Activated CD4-positive, alpha-beta T cell treated with anti-CD3 and anti-CD28 coated beads for 36 hours (primary cell): ENCODE measurements at regions of chr16 and their contacts with region 1.

Region 1: DNA sequence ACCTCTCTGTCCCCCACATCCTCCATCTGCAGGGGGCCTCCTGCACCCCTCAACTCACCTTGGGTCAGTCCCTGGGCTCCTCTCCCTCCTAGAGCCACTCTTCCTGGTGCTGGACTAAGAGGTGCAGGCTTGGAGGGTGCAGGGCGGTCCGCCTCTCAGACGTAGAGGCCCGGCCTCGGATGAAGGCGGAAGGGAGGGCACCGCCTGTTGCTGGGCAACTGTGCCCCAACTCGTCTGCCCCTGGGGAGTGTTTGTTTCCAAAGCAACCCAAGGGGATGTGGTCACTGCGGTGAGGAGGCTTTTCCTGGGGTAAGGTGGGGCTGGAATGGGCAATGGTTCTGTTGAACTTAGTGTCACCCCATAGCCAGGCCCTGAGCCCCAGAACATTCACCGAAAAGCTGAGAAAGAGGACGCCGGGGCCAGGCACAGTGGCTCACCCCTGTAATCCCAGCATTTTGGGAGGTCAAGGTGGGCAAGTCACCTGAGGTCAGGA is at the start of gene C16orf54:
- DNase-seq: peak; percentile 93
- ATAC-seq: peak; percentile 78
- H3K4me3 Mint-ChIP-seq: peak within 1 kb of the TSS; percentile 97
- H3K27ac Mint-ChIP-seq: peak within 1 kb of the TSS; percentile 97
- H3K4me1 Mint-ChIP-seq: peaks cover 59% of the 10 kb centered on the region
- H3K27me3 Mint-ChIP-seq: no peaks in the 10 kb centered on the region
- total RNA-seq, gene C16orf54: 21.3 to 22.0 TPM

Region 2: DNA sequence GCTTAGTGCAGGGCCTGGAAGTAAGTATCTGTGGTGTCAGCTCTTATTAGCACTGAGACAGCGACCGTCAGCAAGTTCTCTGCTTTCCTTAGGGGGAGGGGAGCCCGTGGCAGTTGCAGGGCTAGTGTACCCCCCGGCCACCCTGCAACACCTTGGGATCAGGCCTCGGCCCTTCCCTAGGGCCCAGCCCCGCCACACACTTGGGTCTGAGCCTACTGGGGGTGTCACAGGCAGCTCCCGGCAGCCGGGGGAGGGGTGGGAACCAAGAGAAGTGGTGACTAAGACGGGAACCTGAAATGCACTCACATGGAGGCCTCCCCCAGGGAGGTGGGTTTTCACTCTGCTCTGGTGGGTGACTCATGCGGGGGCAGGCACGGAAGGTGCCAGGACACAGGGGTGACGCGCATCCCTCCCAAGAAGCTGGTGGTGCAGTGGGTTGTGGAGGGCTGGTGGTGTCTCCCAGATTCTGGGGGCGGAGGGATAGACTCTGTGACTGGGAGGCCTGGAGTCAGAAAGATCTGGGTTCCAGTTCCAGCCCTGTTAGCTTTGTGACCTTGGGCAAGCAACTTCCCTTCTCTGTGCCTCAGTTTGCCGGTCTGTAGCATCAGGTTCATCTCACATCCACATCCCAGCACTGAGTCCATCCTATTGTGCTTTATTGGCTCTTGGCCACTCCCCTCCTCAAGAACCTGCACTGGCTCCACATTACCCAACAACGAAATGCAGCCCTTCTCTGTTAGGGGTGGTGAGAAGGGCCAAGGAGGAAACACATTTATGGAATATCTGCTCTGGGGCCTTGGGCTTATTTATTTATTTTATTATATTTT is 716.5 kb before region 1 on chr16:
- CTCF ChIA-PET with region 1: no interaction called
- POLR2A ChIA-PET with region 1: no interaction called
- intact Hi-C with region 1: loop called in 1 of 2 experiments (anchors 10 kb)
- DNase-seq: peak; percentile 96
- ATAC-seq: peak; percentile 96
- H3K4me3 Mint-ChIP-seq: peak overlapping the region; percentile 0
- H3K27ac Mint-ChIP-seq: peak overlapping the region; percentile 84
- H3K4me1 Mint-ChIP-seq: peaks cover 46% of the 10 kb centered on the region
- H3K27me3 Mint-ChIP-seq: no peaks in the 10 kb centered on the region

Region 3: GRCh38 chr16:29729116-29729521 is 16.8 kb before region 1 on chr16:
- CTCF ChIA-PET with region 1: interaction called, 10 read pairs
- POLR2A ChIA-PET with region 1: interaction called, 5 read pairs
- intact Hi-C with region 1: loop called (anchors 1 kb)
- DNase-seq: no peak
- ATAC-seq: no peak
- H3K4me3 Mint-ChIP-seq: no peak overlapping the region
- H3K27ac Mint-ChIP-seq: no peak overlapping the region
- H3K4me1 Mint-ChIP-seq: peaks cover 37% of the 10 kb centered on the region
- H3K27me3 Mint-ChIP-seq: no peaks in the 10 kb centered on the region

Region 4: GRCh38 chr16:29784901-29785500 is 39.1 kb after region 1 on chr16:
- CTCF ChIA-PET with region 1: interaction called, 16 read pairs
- POLR2A ChIA-PET with region 1: interaction called, 4 read pairs
- intact Hi-C with region 1: loop called (anchors 1 kb)
- DNase-seq: peak; percentile 89
- ATAC-seq: peak; percentile 79
- H3K4me3 Mint-ChIP-seq: peak overlapping the region; percentile 51
- H3K27ac Mint-ChIP-seq: no peak overlapping the region
- H3K4me1 Mint-ChIP-seq: peaks cover 29% of the 10 kb centered on the region
- H3K27me3 Mint-ChIP-seq: no peaks in the 10 kb centered on the region

Region 5: DNA sequence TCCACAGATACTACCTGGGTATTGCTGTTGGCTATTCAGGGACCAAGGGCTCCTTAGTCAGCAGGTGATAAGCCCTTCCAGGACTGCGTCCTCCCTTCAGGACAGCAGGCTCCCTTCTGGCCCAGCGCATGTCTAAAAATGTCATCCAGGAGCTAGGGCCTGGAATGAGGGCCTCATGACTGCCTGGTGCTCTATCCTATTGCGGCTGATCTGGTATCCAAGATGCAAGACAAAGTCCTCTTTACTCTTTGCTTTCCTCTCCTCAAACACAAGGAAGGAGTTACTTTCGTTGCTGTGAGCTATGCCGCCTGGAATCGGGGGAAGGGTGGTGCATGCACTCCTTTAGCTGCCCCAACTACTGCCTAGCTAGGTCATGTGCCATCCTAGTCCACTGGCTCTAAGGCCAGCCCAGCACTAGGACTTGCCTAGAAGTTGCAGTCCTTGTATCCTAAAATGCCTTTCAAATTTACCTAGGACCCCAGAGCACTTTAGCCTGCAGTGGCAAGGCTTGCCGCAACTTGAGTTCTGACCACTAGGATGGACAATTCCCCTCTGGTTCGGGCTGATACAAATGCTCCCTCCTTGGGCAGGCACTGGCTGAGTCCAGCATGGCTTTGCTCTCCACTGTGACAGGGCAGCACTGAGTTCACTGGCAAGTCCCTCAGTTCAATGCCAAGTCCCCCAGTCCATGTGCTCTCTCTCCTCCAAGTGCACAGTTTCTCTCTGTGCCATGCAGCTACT is 205.9 kb after region 1 on chr16:
- CTCF ChIA-PET with region 1: no interaction called
- POLR2A ChIA-PET with region 1: no interaction called
- intact Hi-C with region 1: no loop called
- DNase-seq: no peak
- ATAC-seq: no peak
- H3K4me3 Mint-ChIP-seq: no peak overlapping the region
- H3K27ac Mint-ChIP-seq: no peak overlapping the region
- H3K4me1 Mint-ChIP-seq: no peaks in the 10 kb centered on the region
- H3K27me3 Mint-ChIP-seq: peaks cover 4% of the 10 kb centered on the region